ENCODE measurements at regions of chr2 and their contacts with region 1.

Region 1: GRCh38 chr2:190459881-190460280 is 51.7 kb downstream of the MFSD6 start:
- DNase-seq: no peak

Region 2: DNA sequence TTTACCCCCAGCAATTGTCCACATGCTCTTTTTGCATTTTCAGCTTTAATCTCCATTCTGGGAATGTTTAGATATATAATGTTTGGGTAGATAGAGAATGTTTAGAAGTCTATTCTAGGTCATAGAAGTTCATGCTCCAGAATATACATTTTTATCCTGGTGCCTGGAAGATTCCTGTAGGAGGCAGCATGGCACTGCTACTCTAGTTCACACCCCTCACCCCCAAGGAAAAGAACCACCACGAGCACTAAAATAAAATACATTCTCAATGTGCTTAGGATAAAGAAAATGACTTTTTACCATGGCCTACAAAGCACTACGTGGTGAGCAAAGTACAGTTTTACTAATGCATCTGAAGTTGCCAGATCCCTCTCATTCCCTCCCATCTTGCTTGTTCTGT is 839.1 kb after region 1 on chr2:
- intact Hi-C with region 1: loop called in 1 of 2 experiments (anchors 5 kb)
- DNase-seq: no peak